ENCODE measurements at regions of chr14 and their contacts with region 1.

Region 1: DNA sequence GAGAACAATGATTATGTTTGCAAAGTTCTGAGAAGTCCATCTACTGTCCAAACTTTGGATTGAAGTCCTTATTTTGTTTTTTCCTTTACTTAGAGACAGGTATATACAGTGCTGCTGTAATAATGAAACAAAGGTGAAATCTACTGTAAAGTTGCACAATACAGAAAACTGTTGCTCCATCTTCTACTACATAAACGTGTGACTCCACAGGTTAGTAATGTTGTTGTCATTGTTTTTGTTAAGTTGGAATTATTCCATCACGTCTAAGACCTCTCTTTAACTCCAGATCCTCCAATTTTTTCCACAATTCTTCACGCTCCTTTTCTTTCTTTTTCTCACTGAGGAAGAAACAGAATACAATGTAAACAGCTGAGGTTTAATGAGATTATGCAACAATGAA is 57.0 kb upstream of the GPHB5 start:
- DNase-seq: no peak

Region 2: GRCh38 chr14:62957562-62957961 is 418.2 kb before region 1 on chr14:
- intact Hi-C with region 1: no loop called
- DNase-seq: no peak

Region 3: GRCh38 chr14:63322897-63323573 is 52.7 kb before region 1 on chr14:
- intact Hi-C with region 1: loop called in 1 of 2 experiments (anchors 2 kb)
- DNase-seq: no peak

Measured in posterior vena cava (tissue), 2 donors.